ENCODE measurements at regions of chr2 and their contacts with region 1.

Region 1: DNA sequence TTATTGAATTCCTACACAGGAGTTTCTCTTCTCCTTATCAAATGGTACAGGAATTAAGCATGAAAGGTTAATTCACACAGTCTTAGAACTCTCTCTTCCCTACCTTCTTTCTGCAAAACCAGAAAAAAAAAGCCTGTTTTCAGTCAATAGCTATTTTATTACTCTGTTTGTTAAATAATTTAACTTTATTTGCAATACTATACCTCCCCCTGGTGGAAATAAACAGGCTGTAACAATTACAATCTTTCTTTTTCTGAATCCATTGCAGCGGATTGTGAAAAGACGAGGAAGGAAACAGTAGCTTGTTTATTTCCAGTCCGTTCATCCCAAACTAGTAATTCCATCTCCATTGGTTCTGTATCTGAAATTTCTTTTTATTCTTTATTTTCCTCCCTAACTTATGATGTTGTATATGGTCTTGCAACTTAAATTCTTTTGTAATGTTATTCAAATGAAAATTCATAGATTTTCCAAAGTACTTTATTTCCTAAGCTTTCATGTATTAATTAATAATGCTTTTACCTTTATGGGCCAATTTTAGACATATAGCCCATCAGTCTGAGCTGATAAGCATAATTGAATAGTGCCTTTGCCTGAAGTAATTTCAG is 165.2 kb downstream of the SH3BP4 start:
- DNase-seq: peak; percentile 54

Region 2: GRCh38 chr2:234544659-234545611 is 572.1 kb before region 1 on chr2:
- in situ Hi-C with region 1: loop called (anchors 10 kb)
- DNase-seq: peak; percentile 60

Measured in G401 (cell line).